ENCODE measurements at regions of chr22 and their contacts with region 1.

Region 1: DNA sequence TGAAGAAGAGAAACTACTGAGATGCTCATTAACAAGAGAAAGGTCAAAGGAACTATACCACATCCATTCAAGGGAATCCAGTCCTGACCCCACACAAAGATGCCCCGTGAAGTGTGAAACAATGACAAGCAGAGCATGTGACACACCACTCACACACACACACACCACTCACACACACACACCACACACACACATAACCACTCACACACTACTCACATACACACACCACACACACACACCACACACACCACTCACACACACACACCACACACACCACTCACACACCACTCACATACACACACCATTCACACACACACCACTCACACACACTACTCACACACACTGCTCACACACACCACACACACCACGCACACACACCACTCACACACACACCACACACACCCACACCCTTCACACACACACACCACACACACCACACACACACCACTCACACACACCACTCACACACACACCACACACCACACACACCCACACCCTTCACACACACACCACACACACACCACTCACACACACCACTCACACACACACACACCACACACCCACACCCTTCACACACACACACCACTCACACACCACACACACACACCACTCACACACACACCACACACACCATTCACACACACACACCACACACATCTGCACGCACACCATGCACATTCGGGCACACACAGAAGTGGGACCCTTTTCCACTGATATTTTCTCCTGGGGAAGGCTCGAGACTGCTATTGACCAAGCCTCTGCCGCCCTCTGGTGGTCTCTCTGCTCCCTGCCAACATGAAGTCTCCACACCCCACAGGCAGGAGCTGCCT is 32.0 kb upstream of the COMT start:
- DNase-seq: peak; percentile 47
- H3K4me3 ChIP-seq: no peak overlapping the region
- H3K27ac ChIP-seq: no peak overlapping the region
- H3K4me1 ChIP-seq: no peaks in the 10 kb centered on the region
- H3K27me3 ChIP-seq: no peaks in the 10 kb centered on the region
- CTCF ChIP-seq: peak; percentile 92 to 96

Region 2: GRCh38 chr22:19730655-19731360 is 178.8 kb before region 1 on chr22:
- CTCF ChIA-PET with region 1: interaction called, 14 read pairs
- dilution Hi-C with region 1: no loop called
- in situ Hi-C with region 1: loop called in 1 of 2 experiments (anchors 5 kb)
- intact Hi-C with region 1: loop called (anchors 1 kb)
- DNase-seq: peak; percentile 48
- H3K4me3 ChIP-seq: peak overlapping the region; percentile 24 to 48 (median 44)
- H3K27ac ChIP-seq: no peak overlapping the region
- H3K4me1 ChIP-seq: no peaks in the 10 kb centered on the region
- H3K27me3 ChIP-seq: no peaks in the 10 kb centered on the region
- CTCF ChIP-seq: peak; percentile 80 to 96

Region 3: GRCh38 chr22:19844377-19845053 is 65.0 kb before region 1 on chr22:
- CTCF ChIA-PET with region 1: no interaction called
- dilution Hi-C with region 1: no loop called
- in situ Hi-C with region 1: loop called in 1 of 2 experiments (anchors 10 kb)
- intact Hi-C with region 1: no loop called
- DNase-seq: no peak
- H3K4me3 ChIP-seq: no peak overlapping the region
- H3K27ac ChIP-seq: no peak overlapping the region
- H3K4me1 ChIP-seq: peaks cover 29% of the 10 kb centered on the region
- H3K27me3 ChIP-seq: no peaks in the 10 kb centered on the region
- CTCF ChIP-seq: peak in 1 of 2 donors; percentile 13

Region 4: GRCh38 chr22:19879695-19880506 is 29.7 kb before region 1 on chr22:
- CTCF ChIA-PET with region 1: no interaction called
- dilution Hi-C with region 1: no loop called
- in situ Hi-C with region 1: no loop called
- intact Hi-C with region 1: loop called (anchors 2 kb)
- DNase-seq: no peak
- H3K4me3 ChIP-seq: no peak overlapping the region
- H3K27ac ChIP-seq: no peak overlapping the region
- H3K4me1 ChIP-seq: peaks cover 44% of the 10 kb centered on the region
- H3K27me3 ChIP-seq: no peaks in the 10 kb centered on the region
- CTCF ChIP-seq: no peak

Measured in mammary epithelial cell (primary cell).